ENCODE measurements at regions of chr9 and their contacts with region 1.

Region 1: GRCh38 chr9:137046098-137046787 is at the start of gene NPDC1:
- DNase-seq: peak; percentile 89 to 95
- H3K4me3 ChIP-seq: peak within 1 kb of the TSS; percentile 63
- H3K4me3 Mint-ChIP-seq: peak within 1 kb of the TSS; percentile 79
- H3K27ac Mint-ChIP-seq: no peak within 1 kb of the TSS
- H3K4me1 ChIP-seq: 0 out of 2 replicates have a peak, but pooled peaks cover 5% of the 10 kb centered on the region
- H3K4me1 Mint-ChIP-seq: no peaks in the 10 kb centered on the region
- H3K27me3 ChIP-seq: no peaks in the 10 kb centered on the region
- H3K27me3 Mint-ChIP-seq: no peaks in the 10 kb centered on the region
- CTCF ChIP-seq: peak; percentile 85 to 97
- total RNA-seq, gene NPDC1: 44.1 and 49.2 TPM in 2 replicates

Region 2: DNA sequence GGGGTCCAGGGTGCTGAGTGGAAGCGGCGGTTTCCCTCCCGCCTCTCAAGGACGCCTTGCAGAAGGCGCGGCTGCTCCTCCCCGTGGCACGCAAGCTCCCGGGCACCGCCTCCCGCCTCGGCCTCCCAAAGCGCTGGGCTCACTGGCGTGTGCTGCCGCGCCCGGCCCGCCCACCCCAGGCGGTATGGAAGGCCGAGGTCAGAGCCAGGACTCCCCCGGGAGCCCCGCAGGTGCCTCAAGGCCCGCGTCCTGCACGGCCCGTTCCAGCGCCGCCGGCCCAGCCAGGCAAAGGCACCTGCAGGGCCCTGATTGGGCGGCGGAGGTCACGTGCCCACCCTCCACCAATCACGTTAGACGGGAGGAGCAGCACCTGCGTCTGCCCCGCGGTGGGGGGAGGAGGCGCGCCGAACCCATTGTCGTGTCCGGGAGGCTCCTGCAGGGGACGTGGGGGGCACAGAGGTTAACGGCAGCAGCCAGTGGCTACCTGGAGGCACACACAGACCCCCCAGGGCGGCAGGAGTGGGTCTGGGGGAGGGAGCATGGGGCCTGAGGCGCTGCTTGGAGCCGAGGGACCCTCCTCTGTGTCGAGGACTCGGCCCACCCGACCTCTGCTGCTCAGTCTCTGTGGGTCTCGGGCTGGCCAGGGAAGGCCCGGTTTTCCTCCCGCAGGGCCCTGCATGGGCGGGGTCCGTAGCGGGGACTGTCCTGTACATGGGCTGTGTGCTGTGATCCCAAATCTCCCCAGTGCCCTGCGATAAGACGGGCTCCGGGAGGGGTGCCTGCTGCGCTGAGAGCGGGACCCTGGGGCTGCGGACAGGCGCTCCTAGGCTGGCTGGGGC is 96.2 kb before region 1 on chr9:
- CTCF ChIA-PET with region 1: interaction called, 10 read pairs
- POLR2A ChIA-PET with region 1: no interaction called
- intact Hi-C with region 1: no loop called
- DNase-seq: peak; percentile 99
- H3K4me3 ChIP-seq: peak overlapping the region; percentile 60
- H3K4me3 Mint-ChIP-seq: peak overlapping the region; percentile 76
- H3K27ac Mint-ChIP-seq: peak overlapping the region; percentile 94
- H3K4me1 ChIP-seq: peaks cover 41% of the 10 kb centered on the region
- H3K4me1 Mint-ChIP-seq: no peaks in the 10 kb centered on the region
- H3K27me3 ChIP-seq: no peaks in the 10 kb centered on the region
- H3K27me3 Mint-ChIP-seq: no peaks in the 10 kb centered on the region
- CTCF ChIP-seq: peak; percentile 15 to 41

Region 3: GRCh38 chr9:137064027-137064879 is 18.0 kb after region 1 on chr9:
- CTCF ChIA-PET with region 1: interaction called, 57 read pairs
- POLR2A ChIA-PET with region 1: no interaction called
- intact Hi-C with region 1: no loop called
- DNase-seq: peak in 1 of 2 experiments; percentile 72
- H3K4me3 ChIP-seq: no peak overlapping the region
- H3K4me3 Mint-ChIP-seq: no peak overlapping the region
- H3K27ac Mint-ChIP-seq: no peak overlapping the region
- H3K4me1 ChIP-seq: peaks cover 15% of the 10 kb centered on the region
- H3K4me1 Mint-ChIP-seq: peaks cover 10% of the 10 kb centered on the region
- H3K27me3 ChIP-seq: no peaks in the 10 kb centered on the region
- H3K27me3 Mint-ChIP-seq: no peaks in the 10 kb centered on the region
- CTCF ChIP-seq: peak; percentile 90 to 94

Region 4: DNA sequence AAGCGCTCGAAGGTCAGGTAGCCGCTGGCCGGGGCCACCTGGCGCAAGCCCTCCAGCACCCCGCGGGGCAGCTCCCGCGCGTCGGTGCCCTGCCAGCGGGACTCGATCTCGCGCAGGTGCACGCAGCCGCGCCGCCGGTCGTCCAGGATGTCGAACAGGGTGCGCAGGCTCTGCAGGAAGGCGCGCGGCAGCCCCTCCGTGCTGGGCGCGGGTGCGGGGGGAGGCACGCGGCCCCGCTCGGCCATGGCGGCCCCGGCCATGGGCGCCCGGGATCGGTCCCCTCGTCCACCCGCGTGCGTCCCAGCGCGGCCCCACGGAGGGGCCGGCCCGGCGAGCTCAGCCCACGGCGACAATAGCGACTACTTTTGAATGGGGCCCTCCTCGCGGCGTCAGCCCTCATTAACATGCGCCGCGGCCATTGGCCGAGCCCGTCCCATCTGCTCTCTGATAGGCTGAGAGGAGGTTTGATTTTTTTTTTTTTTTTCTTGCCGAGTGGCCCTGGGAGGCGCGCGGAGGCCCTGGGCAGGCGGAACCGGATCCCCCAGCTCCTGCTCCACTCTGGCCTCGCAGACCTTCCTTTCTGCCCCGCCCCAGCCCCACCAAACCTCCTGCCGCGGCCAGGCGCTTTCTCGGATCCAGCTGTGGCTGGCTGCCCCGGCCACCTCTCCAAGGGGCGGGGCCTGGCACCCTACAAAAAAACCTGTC is 24.1 kb after region 1 on chr9 and contains the start of gene SAPCD2:
- CTCF ChIA-PET with region 1: interaction called, 57 read pairs
- POLR2A ChIA-PET with region 1: interaction called, 4 read pairs
- intact Hi-C with region 1: loop called (anchors 1 kb)
- DNase-seq: peak; percentile 95
- H3K4me3 ChIP-seq: peak within 1 kb of the TSS; percentile 80
- H3K4me3 Mint-ChIP-seq: peak within 1 kb of the TSS; percentile 68
- H3K27ac Mint-ChIP-seq: peak within 1 kb of the TSS; percentile 85
- H3K4me1 ChIP-seq: peaks cover 33% of the 10 kb centered on the region
- H3K4me1 Mint-ChIP-seq: peaks cover 18% of the 10 kb centered on the region
- H3K27me3 ChIP-seq: no peaks in the 10 kb centered on the region
- H3K27me3 Mint-ChIP-seq: no peaks in the 10 kb centered on the region
- CTCF ChIP-seq: no peak
- total RNA-seq, gene SAPCD2: 53.3 and 57.5 TPM in 2 replicates

Region 5: DNA sequence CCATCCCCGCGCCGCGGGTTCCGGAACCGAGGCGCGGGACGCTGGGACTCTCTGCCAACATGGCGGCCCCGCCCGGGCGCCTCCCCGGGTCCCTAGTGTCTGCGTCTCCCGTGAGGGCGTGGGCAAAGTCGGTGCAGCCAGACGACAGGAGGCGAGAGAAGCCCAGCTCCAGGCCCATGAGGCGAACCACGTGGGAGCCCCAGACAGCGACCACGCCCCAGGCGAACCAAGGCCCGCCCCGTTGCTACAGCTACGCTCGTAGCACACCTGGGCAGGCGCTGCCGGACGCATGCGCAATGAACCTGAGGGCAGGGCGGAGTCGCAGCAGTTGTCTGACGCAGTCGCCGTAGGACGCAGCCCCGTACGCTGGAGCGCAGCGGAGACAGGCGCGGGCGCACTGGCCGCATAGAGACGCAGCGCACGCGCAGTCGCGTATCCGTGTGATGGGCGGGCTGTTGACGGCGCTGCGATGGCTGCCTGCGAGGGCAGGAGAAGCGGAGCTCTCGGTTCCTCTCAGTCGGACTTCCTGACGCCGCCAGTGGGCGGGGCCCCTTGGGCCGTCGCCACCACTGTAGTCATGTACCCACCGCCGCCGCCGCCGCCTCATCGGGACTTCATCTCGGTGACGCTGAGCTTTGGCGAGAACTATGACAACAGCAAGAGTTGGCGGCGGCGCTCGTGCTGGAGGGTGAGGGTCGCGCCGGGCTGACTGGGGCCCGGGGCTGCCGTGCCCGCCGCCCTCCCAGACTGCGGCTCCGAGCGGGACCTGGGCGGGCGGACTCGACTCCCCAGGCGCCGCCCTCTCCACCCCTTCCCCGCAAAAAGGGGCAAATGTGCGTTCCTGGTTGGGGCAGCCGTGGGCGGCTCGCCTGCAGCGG is 40.5 kb after region 1 on chr9 and contains the start of gene MAN1B1:
- CTCF ChIA-PET with region 1: interaction called, 11 read pairs
- POLR2A ChIA-PET with region 1: interaction called, 7 read pairs
- intact Hi-C with region 1: no loop called
- DNase-seq: peak; percentile 99
- H3K4me3 ChIP-seq: peak within 1 kb of the TSS; percentile 75
- H3K4me3 Mint-ChIP-seq: peak within 1 kb of the TSS; percentile 100
- H3K27ac Mint-ChIP-seq: peak within 1 kb of the TSS; percentile 100
- H3K4me1 ChIP-seq: peaks cover 7% of the 10 kb centered on the region
- H3K4me1 Mint-ChIP-seq: peaks cover 15% of the 10 kb centered on the region
- H3K27me3 ChIP-seq: no peaks in the 10 kb centered on the region
- H3K27me3 Mint-ChIP-seq: no peaks in the 10 kb centered on the region
- CTCF ChIP-seq: no peak
- total RNA-seq, gene MAN1B1: 57.7 and 58.0 TPM in 2 replicates